Heart left ventricle (tissue), 16 donors: ENCODE measurements at regions of chr22 and their contacts with region 1.

Region 1: GRCh38 chr22:45424231-45424731 is 10.8 kb downstream of the RIBC2 start:
- DNase-seq: peak in 1 of 5 donors; percentile 51
- ATAC-seq: peak in 3 of 4 donors; percentile 49 to 72 (median 51)
- H3K4me3 ChIP-seq: no peak overlapping the region
- H3K27ac ChIP-seq: peak overlapping the region in 1 of 12 donors; percentile 46
- H3K4me1 ChIP-seq: peaks cover 0 to 14% (median 0%) of the 10 kb centered on the region in 12 donors
- H3K27me3 ChIP-seq: peaks cover 0 to 4% (median 0%) of the 10 kb centered on the region in 9 donors
- CTCF ChIP-seq: no peak
- POLR2A ChIP-seq: no peak

Region 2: GRCh38 chr22:45349921-45350320 is 74.4 kb before region 1 on chr22:
- intact Hi-C with region 1: loop called in 1 of 10 experiments (anchors 5 kb)
- DNase-seq: no peak
- ATAC-seq: no peak
- H3K4me3 ChIP-seq: no peak overlapping the region
- H3K27ac ChIP-seq: no peak overlapping the region
- H3K4me1 ChIP-seq: no peaks in the 10 kb centered on the region
- H3K27me3 ChIP-seq: no peaks in the 10 kb centered on the region
- CTCF ChIP-seq: no peak
- POLR2A ChIP-seq: no peak

Region 3: DNA sequence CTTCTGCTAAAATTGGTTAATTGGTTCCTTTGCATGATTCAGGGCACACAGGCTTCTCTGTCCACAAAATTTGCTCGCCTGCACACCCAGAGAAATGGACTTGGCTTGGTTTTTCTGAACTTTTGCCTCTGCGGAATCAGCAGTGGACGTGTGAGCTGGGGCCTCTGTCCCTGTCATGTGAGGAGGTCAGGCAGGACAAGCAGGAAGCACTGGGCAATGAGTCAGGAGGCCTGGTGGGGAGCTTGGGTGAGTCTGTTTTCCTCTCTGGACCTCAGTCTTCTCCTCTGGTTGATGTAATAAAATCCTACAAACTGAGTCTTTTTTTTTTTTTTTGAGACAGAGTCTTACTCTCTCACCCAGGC is 1123.6 kb after region 1 on chr22:
- intact Hi-C with region 1: no loop called
- DNase-seq: peak in 4 of 5 donors; percentile 77 to 91 (median 84)
- ATAC-seq: peak; percentile 37 to 72 (median 64)
- H3K4me3 ChIP-seq: peak overlapping the region in 6 of 12 donors; percentile 5 to 24 (median 11)
- H3K27ac ChIP-seq: peak overlapping the region; percentile 81 to 98 (median 93)
- H3K4me1 ChIP-seq: peaks cover 0 to 53% (median 28%) of the 10 kb centered on the region in 12 donors
- H3K27me3 ChIP-seq: peaks cover 0 to under 1% (median 0%) of the 10 kb centered on the region in 9 donors
- CTCF ChIP-seq: no peak
- POLR2A ChIP-seq: peak in 1 of 2 donors; percentile 11